MCF 10A (cell line): ENCODE measurements at regions of chr22 and their contacts with region 1.

Region 1: DNA sequence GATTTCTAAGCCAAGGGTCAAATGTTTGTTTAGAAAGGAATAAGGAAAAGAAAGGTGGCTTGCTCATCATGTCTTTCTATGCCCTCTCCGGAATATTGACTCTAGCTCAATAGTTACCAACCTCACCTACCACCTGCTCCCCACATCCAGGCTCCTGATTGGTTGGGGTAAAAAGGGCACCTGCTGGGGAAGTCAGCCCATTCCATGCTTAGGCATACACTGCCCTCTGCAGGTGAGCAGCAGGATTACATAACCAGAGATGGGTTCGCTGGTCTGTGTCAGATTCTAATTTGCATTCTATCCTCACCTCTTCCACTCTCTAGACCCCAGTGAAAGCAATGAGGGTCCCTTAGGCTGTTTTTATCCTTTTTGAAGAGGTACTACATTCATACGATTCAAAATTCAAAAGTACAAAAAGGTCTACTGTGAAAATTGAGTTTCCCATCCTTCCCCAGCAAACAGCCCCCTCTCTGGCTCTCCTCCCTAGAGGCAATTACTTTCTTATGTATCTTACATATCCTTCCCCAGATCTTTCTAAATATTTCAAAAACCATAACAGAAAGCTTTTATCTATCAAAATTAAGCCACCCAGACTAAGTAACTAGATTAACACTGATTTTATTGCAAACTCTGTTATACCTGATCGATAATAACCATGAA is 98.0 kb upstream of the ASPHD2 start:
- DNase-seq: peak; percentile 70
- H3K4me3 Mint-ChIP-seq: no peak overlapping the region
- H3K27ac Mint-ChIP-seq: no peak overlapping the region
- H3K4me1 Mint-ChIP-seq: no peaks in the 10 kb centered on the region
- H3K27me3 Mint-ChIP-seq: peaks cover 31% of the 10 kb centered on the region
- CTCF ChIP-seq: peak; percentile 96

Region 2: DNA sequence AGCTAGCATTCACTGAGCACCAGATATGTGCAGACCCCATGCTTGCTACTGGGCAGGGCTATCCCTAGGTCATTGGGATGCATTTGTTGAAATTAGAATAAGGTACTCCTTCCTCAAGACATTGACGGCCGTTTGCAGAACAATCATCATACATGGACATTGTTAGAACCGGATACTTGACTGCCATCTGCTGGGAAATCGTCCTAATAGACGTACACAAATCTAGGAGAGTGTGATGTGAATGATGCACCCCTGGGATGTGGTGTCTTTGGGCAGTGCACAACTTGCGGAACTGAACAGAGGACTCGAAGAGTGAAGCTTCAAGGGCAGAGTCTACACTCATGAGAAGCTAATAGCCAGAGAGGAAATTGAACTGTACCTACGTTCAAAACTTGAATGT is 553.2 kb before region 1 on chr22:
- CTCF ChIA-PET with region 1: interaction called, 15 read pairs
- POLR2A ChIA-PET with region 1: no interaction called
- intact Hi-C with region 1: loop called (anchors 1 kb)
- DNase-seq: peak; percentile 71
- H3K4me3 Mint-ChIP-seq: no peak overlapping the region
- H3K27ac Mint-ChIP-seq: no peak overlapping the region
- H3K4me1 Mint-ChIP-seq: no peaks in the 10 kb centered on the region
- H3K27me3 Mint-ChIP-seq: no peaks in the 10 kb centered on the region
- CTCF ChIP-seq: peak; percentile 31

Region 3: GRCh38 chr22:25898689-25899365 is 432.3 kb before region 1 on chr22:
- CTCF ChIA-PET with region 1: no interaction called
- POLR2A ChIA-PET with region 1: no interaction called
- intact Hi-C with region 1: loop called (anchors 5 kb)
- DNase-seq: no peak
- H3K4me3 Mint-ChIP-seq: no peak overlapping the region
- H3K27ac Mint-ChIP-seq: no peak overlapping the region
- H3K4me1 Mint-ChIP-seq: peaks cover 6% of the 10 kb centered on the region
- H3K27me3 Mint-ChIP-seq: peaks cover 48% of the 10 kb centered on the region
- CTCF ChIP-seq: peak; percentile 8

Region 4: DNA sequence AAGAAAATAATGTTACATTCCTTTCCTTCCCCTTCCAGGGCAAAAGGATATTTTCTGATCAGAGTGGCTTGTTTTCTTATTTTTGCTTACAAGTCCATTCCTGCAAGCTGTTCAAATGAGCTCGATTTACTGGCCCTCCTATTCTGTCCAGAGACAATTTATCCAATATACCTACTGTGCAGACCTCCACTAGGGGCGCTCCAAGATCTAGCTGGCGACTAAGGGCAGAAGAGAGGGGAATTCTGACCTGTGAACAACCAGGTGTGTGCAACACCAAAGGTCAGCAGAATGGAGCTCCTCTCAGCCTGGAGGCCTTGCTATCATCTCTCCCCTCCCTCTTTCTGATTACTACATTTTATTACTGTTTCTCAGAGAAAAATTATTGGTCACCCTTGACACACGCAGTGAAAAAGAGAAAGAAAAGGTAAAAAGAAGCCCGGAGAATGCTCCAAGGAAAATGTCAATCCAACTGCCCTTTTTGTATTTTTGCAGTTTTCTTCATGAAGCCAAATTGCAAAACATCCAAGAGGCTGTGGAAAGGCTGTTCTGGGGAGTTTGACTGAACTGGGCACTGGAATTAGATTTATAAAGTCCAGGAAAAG is 158.6 kb before region 1 on chr22:
- CTCF ChIA-PET with region 1: interaction called, 3 read pairs
- POLR2A ChIA-PET with region 1: no interaction called
- intact Hi-C with region 1: loop called (anchors 1 kb)
- DNase-seq: peak; percentile 18
- H3K4me3 Mint-ChIP-seq: no peak overlapping the region
- H3K27ac Mint-ChIP-seq: no peak overlapping the region
- H3K4me1 Mint-ChIP-seq: no peaks in the 10 kb centered on the region
- H3K27me3 Mint-ChIP-seq: peaks cover 23% of the 10 kb centered on the region
- CTCF ChIP-seq: peak; percentile 54

Region 5: DNA sequence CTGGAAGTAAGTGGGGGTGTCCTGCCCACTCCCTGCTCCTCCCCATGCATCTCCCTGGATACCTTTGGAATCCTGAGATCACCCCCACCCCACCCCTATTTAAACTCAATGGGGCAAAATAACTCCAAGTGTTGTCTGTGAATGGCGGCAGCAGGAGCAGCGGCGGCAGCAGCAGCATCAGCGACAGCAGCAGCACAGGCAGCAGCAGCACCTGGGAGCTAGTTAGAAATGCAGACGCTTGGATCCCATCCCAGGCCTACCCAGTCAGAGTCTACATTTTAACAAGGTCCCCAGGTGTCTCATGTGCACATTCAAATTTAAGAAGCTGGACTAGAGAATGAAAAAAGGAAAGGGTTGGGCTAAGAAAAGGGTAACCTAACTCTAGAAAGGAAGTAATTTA is 79.2 kb before region 1 on chr22:
- CTCF ChIA-PET with region 1: no interaction called
- POLR2A ChIA-PET with region 1: no interaction called
- intact Hi-C with region 1: no loop called
- DNase-seq: no peak
- H3K4me3 Mint-ChIP-seq: no peak overlapping the region
- H3K27ac Mint-ChIP-seq: no peak overlapping the region
- H3K4me1 Mint-ChIP-seq: no peaks in the 10 kb centered on the region
- H3K27me3 Mint-ChIP-seq: peaks cover 30% of the 10 kb centered on the region
- CTCF ChIP-seq: no peak

Region 6: GRCh38 chr22:26318975-26319374 is 12.1 kb before region 1 on chr22:
- CTCF ChIA-PET with region 1: interaction called, 12 read pairs
- POLR2A ChIA-PET with region 1: no interaction called
- intact Hi-C with region 1: no loop called
- DNase-seq: peak; percentile 23
- H3K4me3 Mint-ChIP-seq: no peak overlapping the region
- H3K27ac Mint-ChIP-seq: no peak overlapping the region
- H3K4me1 Mint-ChIP-seq: peaks cover 12% of the 10 kb centered on the region
- H3K27me3 Mint-ChIP-seq: peaks cover 34% of the 10 kb centered on the region
- CTCF ChIP-seq: peak; percentile 23

Region 7: GRCh38 chr22:26354707-26355106 is 23.6 kb after region 1 on chr22:
- CTCF ChIA-PET with region 1: interaction called, 11 read pairs
- POLR2A ChIA-PET with region 1: interaction called, 3 read pairs
- intact Hi-C with region 1: no loop called
- DNase-seq: no peak
- H3K4me3 Mint-ChIP-seq: no peak overlapping the region
- H3K27ac Mint-ChIP-seq: no peak overlapping the region
- H3K4me1 Mint-ChIP-seq: no peaks in the 10 kb centered on the region
- H3K27me3 Mint-ChIP-seq: peaks cover 21% of the 10 kb centered on the region
- CTCF ChIP-seq: no peak